ENCODE measurements at regions of chr3 and their contacts with region 1.

Region 1: DNA sequence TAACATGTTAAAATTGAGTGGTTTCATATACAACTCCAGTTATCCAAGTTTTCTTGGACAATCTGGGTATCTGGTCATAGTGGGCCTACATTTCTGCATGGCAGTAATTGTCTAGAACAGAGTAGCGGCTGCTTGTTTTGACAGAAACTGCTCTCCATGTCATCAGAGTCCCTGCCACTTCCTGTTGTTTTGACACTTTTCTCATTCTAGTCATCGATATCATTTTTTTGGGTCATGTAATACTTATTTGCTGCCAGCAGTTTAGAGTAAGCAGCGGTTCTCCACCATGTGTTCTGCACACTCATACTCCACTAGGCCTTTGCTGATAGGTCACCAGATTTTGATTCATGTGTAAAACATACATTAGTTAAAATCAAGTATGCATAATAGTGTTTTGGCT is 81.5 kb downstream of the SLC25A26 start:
- DNase-seq: peak; percentile 62
- H3K4me3 Mint-ChIP-seq: peak overlapping the region; percentile 23
- H3K27ac Mint-ChIP-seq: peak overlapping the region; percentile 98
- H3K4me1 Mint-ChIP-seq: peaks cover 72% of the 10 kb centered on the region
- H3K27me3 Mint-ChIP-seq: no peaks in the 10 kb centered on the region

Region 2: GRCh38 chr3:66220602-66221377 is 81.5 kb before region 1 on chr3 and contains the start of gene SLC25A26:
- CTCF ChIA-PET with region 1: interaction called, 3 read pairs
- POLR2A ChIA-PET with region 1: no interaction called
- intact Hi-C with region 1: loop called (anchors 1 kb)
- DNase-seq: peak; percentile 98
- H3K4me3 Mint-ChIP-seq: peak within 1 kb of the TSS; percentile 90
- H3K27ac Mint-ChIP-seq: peak within 1 kb of the TSS; percentile 87
- H3K4me1 Mint-ChIP-seq: peaks cover 50% of the 10 kb centered on the region
- H3K27me3 Mint-ChIP-seq: no peaks in the 10 kb centered on the region
- total RNA-seq, gene SLC25A26: 22.6 TPM

Region 3: GRCh38 chr3:66236281-66236680 is 66.0 kb before region 1 on chr3:
- CTCF ChIA-PET with region 1: interaction called, 3 read pairs
- POLR2A ChIA-PET with region 1: no interaction called
- intact Hi-C with region 1: loop called (anchors 1 kb)
- DNase-seq: no peak
- H3K4me3 Mint-ChIP-seq: no peak overlapping the region
- H3K27ac Mint-ChIP-seq: no peak overlapping the region
- H3K4me1 Mint-ChIP-seq: peaks cover 28% of the 10 kb centered on the region
- H3K27me3 Mint-ChIP-seq: no peaks in the 10 kb centered on the region

Region 4: GRCh38 chr3:66336333-66336766 is 34.1 kb after region 1 on chr3:
- CTCF ChIA-PET with region 1: no interaction called
- POLR2A ChIA-PET with region 1: no interaction called
- intact Hi-C with region 1: loop called (anchors 1 kb)
- DNase-seq: no peak
- H3K4me3 Mint-ChIP-seq: no peak overlapping the region
- H3K27ac Mint-ChIP-seq: no peak overlapping the region
- H3K4me1 Mint-ChIP-seq: peaks cover 26% of the 10 kb centered on the region
- H3K27me3 Mint-ChIP-seq: no peaks in the 10 kb centered on the region

Region 5: GRCh38 chr3:66372681-66373350 is 70.5 kb after region 1 on chr3:
- CTCF ChIA-PET with region 1: interaction called, 13 read pairs
- POLR2A ChIA-PET with region 1: no interaction called
- intact Hi-C with region 1: loop called (anchors 2 kb)
- DNase-seq: peak; percentile 67
- H3K4me3 Mint-ChIP-seq: no peak overlapping the region
- H3K27ac Mint-ChIP-seq: no peak overlapping the region
- H3K4me1 Mint-ChIP-seq: peaks cover 3% of the 10 kb centered on the region
- H3K27me3 Mint-ChIP-seq: no peaks in the 10 kb centered on the region

Region 6: GRCh38 chr3:66394019-66394752 is 91.9 kb after region 1 on chr3:
- CTCF ChIA-PET with region 1: no interaction called
- POLR2A ChIA-PET with region 1: interaction called, 5 read pairs
- intact Hi-C with region 1: loop called (anchors 1 kb)
- DNase-seq: peak; percentile 74
- H3K4me3 Mint-ChIP-seq: peak overlapping the region; percentile 73
- H3K27ac Mint-ChIP-seq: peak overlapping the region; percentile 93
- H3K4me1 Mint-ChIP-seq: peaks cover 57% of the 10 kb centered on the region
- H3K27me3 Mint-ChIP-seq: no peaks in the 10 kb centered on the region

Region 7: DNA sequence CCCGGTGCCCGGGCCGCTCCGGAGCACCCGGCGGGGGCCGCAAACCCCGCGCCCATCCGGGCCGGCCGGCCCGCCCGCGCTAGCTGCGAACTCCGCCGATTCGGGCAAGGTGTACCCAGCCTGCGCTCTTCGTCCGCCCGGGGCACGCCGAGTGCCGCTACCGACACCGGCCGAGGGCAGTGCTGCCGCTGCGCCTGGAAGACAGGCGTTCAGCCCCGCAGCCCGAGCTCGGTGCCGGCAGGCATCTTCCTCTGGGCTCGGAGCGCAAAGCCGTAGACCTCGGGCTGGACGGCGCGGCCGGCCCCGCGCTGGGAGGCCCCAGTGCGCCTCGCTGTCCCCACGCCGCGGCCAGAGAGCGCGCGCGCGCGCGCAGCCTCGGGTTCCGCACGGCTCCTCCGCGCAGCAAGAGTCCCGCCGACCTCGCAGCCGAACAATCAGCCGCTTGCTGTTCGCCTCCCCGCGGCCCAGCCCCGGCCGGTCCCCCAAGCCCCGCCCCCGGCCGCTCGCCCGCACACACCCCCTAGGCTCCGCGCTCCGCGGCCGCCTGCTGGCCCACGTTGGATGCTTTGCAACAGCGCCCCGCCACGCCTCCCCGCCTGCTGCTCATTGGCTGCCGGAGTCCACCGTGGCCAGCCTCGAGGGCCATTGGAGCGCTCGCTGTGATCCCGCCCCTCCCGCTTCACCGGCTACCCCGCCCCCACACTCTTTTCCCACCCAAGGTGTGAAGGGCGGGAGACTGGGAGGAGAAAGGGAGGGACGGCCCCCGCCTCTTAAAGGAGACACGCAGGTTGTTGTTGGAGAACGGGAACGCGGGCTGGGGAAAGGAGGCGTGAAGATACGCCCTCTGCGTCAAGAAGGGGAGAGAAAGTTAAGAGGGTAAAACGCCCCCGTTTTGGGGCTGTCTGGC is 198.5 kb after region 1 on chr3 and contains the start of gene LRIG1:
- CTCF ChIA-PET with region 1: interaction called, 4 read pairs
- POLR2A ChIA-PET with region 1: no interaction called
- intact Hi-C with region 1: loop called (anchors 1 kb)
- DNase-seq: peak; percentile 99
- H3K4me3 Mint-ChIP-seq: peak within 1 kb of the TSS; percentile 96
- H3K27ac Mint-ChIP-seq: peak within 1 kb of the TSS; percentile 91
- H3K4me1 Mint-ChIP-seq: peaks cover 53% of the 10 kb centered on the region
- H3K27me3 Mint-ChIP-seq: no peaks in the 10 kb centered on the region
- total RNA-seq, gene LRIG1: 35.3 to 40.4 TPM

Region 8: DNA sequence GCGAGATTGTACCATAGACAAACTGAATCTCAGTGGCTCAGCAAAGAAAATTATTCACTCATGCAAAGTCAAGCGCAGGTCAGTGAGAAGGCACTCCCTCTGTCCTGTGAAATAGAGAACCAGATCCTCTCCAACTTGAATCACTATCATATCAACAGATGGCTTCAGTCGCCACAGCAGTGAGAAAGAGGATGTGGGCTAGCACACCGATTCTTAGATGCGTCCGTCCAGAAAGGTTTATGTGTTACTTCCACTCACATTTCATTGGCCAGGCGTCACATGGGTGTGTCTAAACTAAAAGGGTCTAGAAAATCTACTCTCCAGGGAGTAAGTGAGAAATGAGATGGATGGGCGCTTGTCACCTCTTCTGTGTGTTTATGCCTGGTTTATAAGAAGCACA is 554.2 kb after region 1 on chr3:
- CTCF ChIA-PET with region 1: no interaction called
- POLR2A ChIA-PET with region 1: no interaction called
- intact Hi-C with region 1: no loop called
- DNase-seq: no peak
- H3K4me3 Mint-ChIP-seq: no peak overlapping the region
- H3K27ac Mint-ChIP-seq: no peak overlapping the region
- H3K4me1 Mint-ChIP-seq: no peaks in the 10 kb centered on the region
- H3K27me3 Mint-ChIP-seq: no peaks in the 10 kb centered on the region